Left ventricle myocardium inferior (tissue), 1 donor: ENCODE measurements at regions of chr1 and their contacts with region 1.

Region 1: DNA sequence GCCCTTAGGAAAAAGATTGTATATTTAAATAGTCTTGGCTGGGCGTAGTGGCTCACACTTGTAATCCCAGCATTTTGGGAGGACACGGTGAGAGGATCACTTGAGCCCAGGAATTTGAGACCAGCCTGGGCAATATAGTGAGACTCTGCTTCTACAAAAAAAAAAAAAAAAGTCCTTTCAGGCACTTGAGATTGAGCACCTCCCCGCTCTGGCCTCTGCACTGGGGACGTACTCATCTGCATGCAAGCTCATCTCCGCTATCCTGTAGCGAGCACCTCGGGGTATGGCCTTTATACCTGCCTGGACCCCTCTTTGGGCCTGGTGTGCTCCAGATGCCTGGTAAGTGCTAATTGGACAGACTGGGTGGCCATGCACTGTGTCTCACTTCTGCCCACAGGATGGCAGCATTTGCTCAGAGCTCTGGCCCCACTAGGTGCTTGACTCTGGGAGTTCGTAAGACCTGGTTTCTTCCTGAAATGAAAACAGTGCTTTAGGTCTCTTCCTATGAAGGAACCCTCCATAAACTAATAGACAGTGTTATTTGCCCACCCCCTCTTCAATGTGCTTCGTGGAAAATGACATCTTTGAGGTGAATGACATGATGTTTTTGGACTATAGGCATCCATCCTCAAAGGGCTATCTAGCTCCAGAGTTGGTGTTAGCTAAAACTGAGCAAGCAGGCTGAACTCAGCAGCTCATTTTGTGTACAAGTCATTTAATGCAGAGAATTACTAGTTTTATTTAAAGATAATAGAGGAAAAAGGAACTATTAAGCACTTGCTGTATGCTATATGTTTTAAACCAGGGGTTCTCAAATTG is 61.7 kb upstream of the ADAR start:
- DNase-seq: peak; percentile 74
- H3K4me3 ChIP-seq: no peak overlapping the region
- H3K27ac ChIP-seq: no peak overlapping the region
- H3K4me1 ChIP-seq: no peaks in the 10 kb centered on the region
- H3K27me3 ChIP-seq: no peaks in the 10 kb centered on the region
- CTCF ChIP-seq: peak; percentile 92

Region 2: GRCh38 chr1:154574716-154575115 is 95.0 kb before region 1 on chr1:
- intact Hi-C with region 1: loop called (anchors 10 kb)
- DNase-seq: no peak
- H3K4me3 ChIP-seq: no peak overlapping the region
- H3K27ac ChIP-seq: no peak overlapping the region
- H3K4me1 ChIP-seq: peaks cover 27% of the 10 kb centered on the region
- H3K27me3 ChIP-seq: peaks cover 4% of the 10 kb centered on the region
- CTCF ChIP-seq: no peak

Region 3: GRCh38 chr1:154751690-154752089 is 82.0 kb after region 1 on chr1:
- intact Hi-C with region 1: loop called (anchors 10 kb)
- DNase-seq: no peak
- H3K4me3 ChIP-seq: no peak overlapping the region
- H3K27ac ChIP-seq: peak overlapping the region; percentile 47
- H3K4me1 ChIP-seq: peaks cover 39% of the 10 kb centered on the region
- H3K27me3 ChIP-seq: no peaks in the 10 kb centered on the region
- CTCF ChIP-seq: no peak

Region 4: GRCh38 chr1:154802982-154803920 is 133.6 kb after region 1 on chr1:
- intact Hi-C with region 1: no loop called
- DNase-seq: no peak
- H3K4me3 ChIP-seq: no peak overlapping the region
- H3K27ac ChIP-seq: no peak overlapping the region
- H3K4me1 ChIP-seq: peaks cover 41% of the 10 kb centered on the region
- H3K27me3 ChIP-seq: peaks cover 12% of the 10 kb centered on the region
- CTCF ChIP-seq: no peak

Region 5: DNA sequence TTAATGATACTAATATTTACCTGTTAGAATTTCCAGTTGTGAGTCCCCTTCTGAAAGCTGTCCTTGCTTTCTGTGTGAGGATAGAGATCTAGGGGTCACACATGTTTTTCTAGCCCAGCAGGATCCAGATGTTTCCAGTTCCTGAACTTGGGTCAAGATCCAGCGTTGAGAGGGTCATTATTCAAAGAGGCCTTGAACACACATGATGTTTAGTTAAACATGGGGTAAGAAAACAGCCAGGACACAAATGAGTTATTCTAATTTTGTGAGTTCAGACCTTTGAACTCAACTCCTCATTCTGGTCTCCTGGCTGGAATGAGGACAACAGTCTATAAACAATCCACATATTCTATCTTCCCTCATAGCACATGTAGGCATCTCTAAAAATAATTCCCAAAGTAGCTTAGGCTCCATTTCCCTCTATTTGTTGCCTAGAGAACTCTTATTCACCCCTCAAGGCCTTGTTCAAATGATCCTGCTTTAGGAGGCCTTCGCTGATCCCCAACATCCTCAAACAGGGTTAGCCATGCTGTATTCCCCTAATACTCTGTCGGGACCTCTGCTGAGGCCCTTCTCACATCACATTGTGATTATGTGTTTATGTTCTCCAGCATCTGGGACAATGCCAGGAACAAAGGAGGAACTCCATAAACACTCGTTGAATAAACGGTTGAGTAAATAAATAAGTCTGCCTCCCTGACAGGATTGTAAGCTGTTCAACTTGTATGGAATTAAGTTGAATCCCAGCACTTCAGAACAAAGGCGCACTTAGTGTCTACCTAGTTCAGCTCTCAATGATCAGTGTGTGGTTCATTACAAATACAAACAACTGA is 215.4 kb after region 1 on chr1:
- intact Hi-C with region 1: loop called (anchors 5 kb)
- DNase-seq: no peak
- H3K4me3 ChIP-seq: no peak overlapping the region
- H3K27ac ChIP-seq: no peak overlapping the region
- H3K4me1 ChIP-seq: peaks cover 27% of the 10 kb centered on the region
- H3K27me3 ChIP-seq: no peaks in the 10 kb centered on the region
- CTCF ChIP-seq: no peak